ENCODE measurements at regions of chr11 and their contacts with region 1.

Region 1: DNA sequence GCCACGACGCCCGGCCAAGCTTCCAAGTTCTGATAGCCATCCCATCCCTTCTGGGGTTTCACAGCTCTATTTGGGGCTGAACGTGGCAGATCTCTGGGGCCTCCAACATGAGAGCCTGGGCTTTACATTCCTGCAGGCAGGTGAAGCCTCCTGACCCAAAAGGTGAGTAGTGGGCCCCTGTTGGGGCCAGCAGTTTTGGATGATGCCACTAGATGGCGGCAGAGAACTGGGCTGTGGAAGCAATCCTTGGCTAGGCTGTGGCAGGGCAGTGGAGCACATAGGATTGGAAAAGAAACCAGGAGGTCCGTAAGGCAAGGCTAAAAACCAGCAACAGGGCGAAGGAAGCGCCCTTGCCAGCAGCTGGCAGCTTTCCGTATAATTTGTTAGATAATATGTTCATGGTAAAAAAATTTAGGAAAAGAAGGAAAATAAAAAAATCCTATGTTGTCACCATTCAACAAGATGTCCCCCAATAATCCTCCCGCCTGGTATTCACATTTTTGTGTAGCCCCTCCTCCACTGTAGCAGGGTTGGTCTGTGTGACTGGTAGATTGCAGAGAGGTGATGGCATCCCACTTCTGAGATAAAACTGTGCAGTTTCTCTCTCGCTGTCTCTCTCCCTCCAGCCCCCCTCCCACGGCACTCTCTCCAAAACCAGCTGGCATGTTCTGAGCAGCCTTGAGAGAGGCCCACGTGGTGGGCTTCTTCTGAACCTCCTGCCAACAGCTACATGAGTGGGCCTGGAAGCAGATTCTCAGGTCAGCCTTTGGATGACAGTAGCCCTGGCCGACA is 43.6 kb upstream of the OR4B1 start:
- DNase-seq: peak; percentile 44 to 52 (median 48)
- H3K4me3 ChIP-seq: no peak overlapping the region
- H3K4me3 Mint-ChIP-seq: peak overlapping the region in 1 of 8 donors; percentile 20
- H3K27ac ChIP-seq: no peak overlapping the region
- H3K27ac Mint-ChIP-seq: peak overlapping the region in 6 of 7 donors; percentile 32 to 75 (median 60)
- H3K4me1 ChIP-seq: peaks cover 21% of the 10 kb centered on the region
- H3K4me1 Mint-ChIP-seq: peaks cover 12 to 47% (median 30%) of the 10 kb centered on the region in 4 donors
- H3K27me3 ChIP-seq: no peaks in the 10 kb centered on the region
- H3K27me3 Mint-ChIP-seq: no peaks in the 10 kb centered on the region

Region 2: DNA sequence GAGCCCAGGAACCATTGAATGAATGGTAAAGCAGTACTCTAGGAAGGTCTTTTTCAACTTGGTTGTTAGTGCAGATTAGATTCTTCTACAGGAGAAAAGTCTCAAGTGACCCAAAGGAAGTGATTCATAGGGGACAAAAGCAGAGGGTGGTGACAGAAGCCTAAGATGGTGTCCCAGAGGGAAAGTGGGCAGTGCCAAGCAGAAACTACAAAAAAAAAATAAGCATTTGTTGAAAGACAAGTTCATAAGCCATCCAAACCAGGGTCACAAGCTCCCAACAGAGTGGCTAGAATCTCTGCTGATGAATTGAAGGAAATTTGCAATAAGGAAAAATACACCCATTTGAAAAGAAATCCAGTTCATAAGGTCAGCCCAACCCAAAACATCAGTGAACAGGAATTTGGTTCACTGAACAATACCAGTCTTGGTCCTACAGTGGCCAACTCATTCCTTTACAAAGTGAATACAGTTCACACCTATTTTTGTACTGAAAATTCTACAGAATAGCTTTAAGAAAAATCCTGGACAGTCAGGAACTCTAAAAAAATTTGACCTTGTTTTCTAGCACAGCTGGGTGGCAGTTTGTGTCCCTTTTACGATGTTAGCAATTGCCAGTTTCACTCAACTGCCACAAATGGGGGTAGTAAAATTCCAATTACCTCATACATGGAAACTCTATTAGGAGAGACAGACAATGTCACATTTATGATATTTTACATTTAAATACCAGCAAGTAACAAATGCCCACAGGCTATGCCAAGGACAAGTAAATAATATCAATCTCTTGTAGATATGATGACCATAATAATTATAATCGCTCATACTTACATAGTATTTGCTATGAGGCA is 303.2 kb before region 1 on chr11:
- CTCF ChIA-PET with region 1: no interaction called
- POLR2A ChIA-PET with region 1: no interaction called
- intact Hi-C with region 1: no loop called
- DNase-seq: no peak
- H3K4me3 ChIP-seq: no peak overlapping the region
- H3K4me3 Mint-ChIP-seq: no peak overlapping the region
- H3K27ac ChIP-seq: no peak overlapping the region
- H3K27ac Mint-ChIP-seq: peak overlapping the region in 3 of 7 donors; percentile 8 to 75 (median 48)
- H3K4me1 ChIP-seq: no peaks in the 10 kb centered on the region
- H3K4me1 Mint-ChIP-seq: peaks cover 4 to 11% (median 6%) of the 10 kb centered on the region in 4 donors
- H3K27me3 ChIP-seq: no peaks in the 10 kb centered on the region
- H3K27me3 Mint-ChIP-seq: no peaks in the 10 kb centered on the region

Region 3: GRCh38 chr11:48161951-48162884 is 10.8 kb before region 1 on chr11:
- CTCF ChIA-PET with region 1: interaction called, 16 read pairs
- POLR2A ChIA-PET with region 1: interaction called, 3 read pairs
- intact Hi-C with region 1: no loop called
- DNase-seq: no peak
- H3K4me3 ChIP-seq: no peak overlapping the region
- H3K4me3 Mint-ChIP-seq: no peak overlapping the region
- H3K27ac ChIP-seq: no peak overlapping the region
- H3K27ac Mint-ChIP-seq: peak overlapping the region in 5 of 7 donors; percentile 33 to 76 (median 51)
- H3K4me1 ChIP-seq: no peaks in the 10 kb centered on the region
- H3K4me1 Mint-ChIP-seq: no peaks in the 10 kb centered on the region
- H3K27me3 ChIP-seq: no peaks in the 10 kb centered on the region
- H3K27me3 Mint-ChIP-seq: no peaks in the 10 kb centered on the region

Region 4: GRCh38 chr11:48193876-48194275 is 20.9 kb after region 1 on chr11:
- CTCF ChIA-PET with region 1: interaction called, 19 read pairs
- POLR2A ChIA-PET with region 1: interaction called, 3 read pairs
- intact Hi-C with region 1: loop called (anchors 2 kb)
- DNase-seq: no peak
- H3K4me3 ChIP-seq: no peak overlapping the region
- H3K4me3 Mint-ChIP-seq: no peak overlapping the region
- H3K27ac ChIP-seq: no peak overlapping the region
- H3K27ac Mint-ChIP-seq: peak overlapping the region in 1 of 7 donors; percentile 34
- H3K4me1 ChIP-seq: peaks cover 15% of the 10 kb centered on the region
- H3K4me1 Mint-ChIP-seq: peaks cover 16 to 36% (median 29%) of the 10 kb centered on the region in 4 donors
- H3K27me3 ChIP-seq: no peaks in the 10 kb centered on the region
- H3K27me3 Mint-ChIP-seq: no peaks in the 10 kb centered on the region

Region 5: GRCh38 chr11:48307760-48308386 is 134.9 kb after region 1 on chr11:
- CTCF ChIA-PET with region 1: interaction called, 28 read pairs
- POLR2A ChIA-PET with region 1: no interaction called
- intact Hi-C with region 1: loop called (anchors 1 kb)
- DNase-seq: peak; percentile 52 to 59 (median 56)
- H3K4me3 ChIP-seq: no peak overlapping the region
- H3K4me3 Mint-ChIP-seq: no peak overlapping the region
- H3K27ac ChIP-seq: no peak overlapping the region
- H3K27ac Mint-ChIP-seq: no peak overlapping the region
- H3K4me1 ChIP-seq: no peaks in the 10 kb centered on the region
- H3K4me1 Mint-ChIP-seq: peaks cover 0 to 6% (median 4%) of the 10 kb centered on the region in 4 donors
- H3K27me3 ChIP-seq: no peaks in the 10 kb centered on the region
- H3K27me3 Mint-ChIP-seq: peaks cover 6 to 10% of the 10 kb centered on the region in 2 donors

Measured in CD4-positive, alpha-beta memory T cell (primary cell).